ENCODE measurements at regions of chr16 and their contacts with region 1.

Region 1: GRCh38 chr16:24906199-24907020 is 60.6 kb downstream of the SLC5A11 start:
- DNase-seq: no peak
- H3K4me3 Mint-ChIP-seq: no peak overlapping the region
- H3K27ac Mint-ChIP-seq: no peak overlapping the region
- H3K4me1 Mint-ChIP-seq: no peaks in the 10 kb centered on the region
- H3K27me3 Mint-ChIP-seq: peaks cover 4% of the 10 kb centered on the region

Region 2: GRCh38 chr16:24895606-24896005 is 10.8 kb before region 1 on chr16:
- CTCF ChIA-PET with region 1: no interaction called
- POLR2A ChIA-PET with region 1: interaction called, 10 read pairs
- DNase-seq: no peak
- H3K4me3 Mint-ChIP-seq: no peak overlapping the region
- H3K27ac Mint-ChIP-seq: no peak overlapping the region
- H3K4me1 Mint-ChIP-seq: no peaks in the 10 kb centered on the region
- H3K27me3 Mint-ChIP-seq: peaks cover 9% of the 10 kb centered on the region